Mammary epithelial cell (primary cell): ENCODE measurements at regions of chr6 and their contacts with region 1.

Region 1: GRCh38 chr6:147202516-147203312 is 1.5 kb upstream of the STXBP5 start:
- DNase-seq: peak; percentile 96
- H3K4me3 ChIP-seq: peak overlapping the region; percentile 67 to 93 (median 89)
- H3K27ac ChIP-seq: peak overlapping the region; percentile 66
- H3K4me1 ChIP-seq: peaks cover 5% of the 10 kb centered on the region
- H3K27me3 ChIP-seq: no peaks in the 10 kb centered on the region
- CTCF ChIP-seq: no peak

Region 2: DNA sequence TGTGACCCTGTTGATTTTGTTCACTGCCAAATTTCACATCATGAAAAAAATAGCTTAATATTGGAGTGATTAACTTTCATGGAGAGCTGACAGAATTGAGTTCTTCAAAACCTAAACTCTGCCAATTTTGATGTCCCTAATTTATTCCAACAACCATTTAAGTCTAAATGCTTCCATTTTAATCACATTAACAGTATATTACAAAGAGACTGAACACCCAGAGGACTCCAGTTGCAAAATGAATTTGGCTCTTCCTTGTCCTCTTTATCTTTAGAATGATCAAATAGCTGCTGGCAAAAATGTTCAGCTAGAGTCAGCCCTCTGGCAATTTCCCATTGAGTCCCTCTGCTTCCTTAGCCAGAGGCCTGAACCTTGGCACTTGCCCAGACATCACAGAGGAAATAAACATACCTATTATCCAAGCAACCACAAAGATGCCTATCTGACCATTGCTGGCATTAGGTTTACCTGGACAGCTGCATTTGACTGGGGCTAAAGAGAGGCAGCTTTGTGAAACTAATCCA is 297.5 kb before region 1 on chr6:
- CTCF ChIA-PET with region 1: no interaction called
- dilution Hi-C with region 1: no loop called
- in situ Hi-C with region 1: loop called in 1 of 2 experiments (anchors 10 kb)
- intact Hi-C with region 1: no loop called
- DNase-seq: peak; percentile 86
- H3K4me3 ChIP-seq: no peak overlapping the region
- H3K27ac ChIP-seq: no peak overlapping the region
- H3K4me1 ChIP-seq: peaks cover 10% of the 10 kb centered on the region
- H3K27me3 ChIP-seq: no peaks in the 10 kb centered on the region
- CTCF ChIP-seq: no peak

Region 3: GRCh38 chr6:147000545-147001488 is 201.9 kb before region 1 on chr6:
- CTCF ChIA-PET with region 1: no interaction called
- dilution Hi-C with region 1: no loop called
- in situ Hi-C with region 1: no loop called
- intact Hi-C with region 1: loop called (anchors 10 kb)
- DNase-seq: no peak
- H3K4me3 ChIP-seq: no peak overlapping the region
- H3K27ac ChIP-seq: no peak overlapping the region
- H3K4me1 ChIP-seq: no peaks in the 10 kb centered on the region
- H3K27me3 ChIP-seq: no peaks in the 10 kb centered on the region
- CTCF ChIP-seq: no peak

Region 4: GRCh38 chr6:147022041-147022440 is 180.7 kb before region 1 on chr6:
- CTCF ChIA-PET with region 1: no interaction called
- dilution Hi-C with region 1: no loop called
- in situ Hi-C with region 1: no loop called
- intact Hi-C with region 1: no loop called
- DNase-seq: peak; percentile 79
- H3K4me3 ChIP-seq: no peak overlapping the region
- H3K27ac ChIP-seq: no peak overlapping the region
- H3K4me1 ChIP-seq: no peaks in the 10 kb centered on the region
- H3K27me3 ChIP-seq: no peaks in the 10 kb centered on the region
- CTCF ChIP-seq: no peak

Region 5: GRCh38 chr6:147081140-147081539 is 121.6 kb before region 1 on chr6:
- CTCF ChIA-PET with region 1: no interaction called
- dilution Hi-C with region 1: no loop called
- in situ Hi-C with region 1: no loop called
- intact Hi-C with region 1: loop called (anchors 1 kb)
- DNase-seq: peak; percentile 85
- H3K4me3 ChIP-seq: no peak overlapping the region
- H3K27ac ChIP-seq: no peak overlapping the region
- H3K4me1 ChIP-seq: peaks cover 14% of the 10 kb centered on the region
- H3K27me3 ChIP-seq: no peaks in the 10 kb centered on the region
- CTCF ChIP-seq: no peak

Region 6: GRCh38 chr6:147154454-147154853 is 48.3 kb before region 1 on chr6:
- CTCF ChIA-PET with region 1: no interaction called
- dilution Hi-C with region 1: no loop called
- in situ Hi-C with region 1: no loop called
- intact Hi-C with region 1: loop called (anchors 2 kb)
- DNase-seq: peak; percentile 87
- H3K4me3 ChIP-seq: no peak overlapping the region
- H3K27ac ChIP-seq: no peak overlapping the region
- H3K4me1 ChIP-seq: peaks cover 24% of the 10 kb centered on the region
- H3K27me3 ChIP-seq: no peaks in the 10 kb centered on the region
- CTCF ChIP-seq: no peak